ENCODE measurements at regions of chr3 and their contacts with region 1.

Region 1: GRCh38 chr3:187112934-187113793 is 26.1 kb downstream of the RPL39L start:
- DNase-seq: peak; percentile 12
- ATAC-seq: peak; percentile 43; the same call in 2 of the 3 replicates
- H3K4me3 ChIP-seq: no peak overlapping the region
- H3K27ac ChIP-seq: no peak overlapping the region
- H3K4me1 ChIP-seq: 0 out of 2 replicates have a peak, but pooled peaks cover 6% of the 10 kb centered on the region
- H3K27me3 ChIP-seq: peaks cover 0 to 7% of the 10 kb centered on the region in 2 experiments; a peak in 1 of 5 replicates
- CTCF ChIP-seq: peak; percentile 59
- EP300 ChIP-seq: no peak
- POLR2A ChIP-seq: no peak
- RAD21 ChIP-seq: no peak; the same call in 1 of the 2 replicates

Region 2: GRCh38 chr3:187164885-187165543 is 51.9 kb after region 1 on chr3:
- CTCF ChIA-PET with region 1: interaction called, 11 read pairs
- POLR2A ChIA-PET with region 1: no interaction called
- in situ Hi-C with region 1: no loop called
- intact Hi-C with region 1: loop called (anchors 1 kb)
- DNase-seq: peak; percentile 58
- ATAC-seq: peak; percentile 78
- H3K4me3 ChIP-seq: no peak overlapping the region
- H3K27ac ChIP-seq: no peak overlapping the region
- H3K4me1 ChIP-seq: no peaks in the 10 kb centered on the region
- H3K27me3 ChIP-seq: no peaks in the 10 kb centered on the region; a peak in 1 of 5 replicates
- CTCF ChIP-seq: peak; percentile 67
- EP300 ChIP-seq: no peak
- POLR2A ChIP-seq: no peak
- RAD21 ChIP-seq: 0 out of 2 replicates have a peak, but pooled peaks have one; percentile 39

Measured in HepG2 (cell line).